ENCODE measurements at regions of chr9 and their contacts with region 1.

Region 1: GRCh38 chr9:79651251-79651795 is 79.6 kb downstream of the TLE4 start:
- DNase-seq: no peak
- ATAC-seq: no peak
- H3K4me3 ChIP-seq: no peak overlapping the region
- H3K27ac ChIP-seq: no peak overlapping the region
- H3K4me1 ChIP-seq: peaks cover 12% of the 10 kb centered on the region
- H3K27me3 ChIP-seq: no peaks in the 10 kb centered on the region
- CTCF ChIP-seq: no peak
- POLR2A ChIP-seq: no peak
- RAD21 ChIP-seq: no peak

Region 2: GRCh38 chr9:79686381-79687130 is 35.2 kb after region 1 on chr9:
- CTCF ChIA-PET with region 1: no interaction called
- POLR2A ChIA-PET with region 1: interaction called, 10 read pairs
- dilution Hi-C with region 1: no loop called
- in situ Hi-C with region 1: no loop called
- intact Hi-C with region 1: no loop called
- DNase-seq: peak; percentile 88
- ATAC-seq: peak; percentile 46; the same call in 1 of the 2 replicates
- H3K4me3 ChIP-seq: no peak overlapping the region
- H3K27ac ChIP-seq: peak overlapping the region; percentile 82
- H3K4me1 ChIP-seq: peaks cover 24% of the 10 kb centered on the region
- H3K27me3 ChIP-seq: no peaks in the 10 kb centered on the region
- CTCF ChIP-seq: no peak
- POLR2A ChIP-seq: no peak
- RAD21 ChIP-seq: no peak

Region 3: DNA sequence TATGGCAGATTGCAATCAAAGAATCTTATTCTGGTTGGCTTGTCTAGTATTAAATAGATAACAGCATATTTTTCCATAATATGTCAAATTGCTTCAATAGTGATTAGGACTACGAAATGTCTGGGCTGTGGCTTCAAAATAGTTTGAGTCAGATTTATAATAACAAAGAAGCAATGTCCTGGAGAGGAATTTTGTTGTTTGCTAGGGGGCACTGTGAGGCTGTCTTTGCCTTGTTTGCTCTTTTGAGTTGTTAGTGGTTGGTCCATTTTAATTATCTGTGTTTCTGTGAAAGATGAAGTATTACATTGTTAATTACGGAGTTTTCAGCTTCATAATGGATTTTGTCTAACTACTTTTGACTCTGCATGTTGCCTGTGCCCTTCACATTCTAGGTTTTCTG is 634.0 kb after region 1 on chr9:
- CTCF ChIA-PET with region 1: no interaction called
- POLR2A ChIA-PET with region 1: no interaction called
- dilution Hi-C with region 1: no loop called
- in situ Hi-C with region 1: no loop called
- intact Hi-C with region 1: no loop called
- DNase-seq: peak; percentile 7
- ATAC-seq: 0 out of 2 replicates have a peak, but pooled peaks have one; percentile 29
- H3K4me3 ChIP-seq: no peak overlapping the region
- H3K27ac ChIP-seq: no peak overlapping the region
- H3K4me1 ChIP-seq: no peaks in the 10 kb centered on the region
- H3K27me3 ChIP-seq: no peaks in the 10 kb centered on the region
- CTCF ChIP-seq: peak; percentile 32; the same call in 1 of the 2 replicates
- POLR2A ChIP-seq: no peak
- RAD21 ChIP-seq: peak; percentile 21; the same call in 1 of the 2 replicates

Measured in IMR-90 (cell line).